ENCODE measurements at regions of chr6 and their contacts with region 1.

Region 1: GRCh38 chr6:43673444-43674084 is 14.0 kb downstream of the MRPS18A start:
- DNase-seq: peak in 1 of 2 donors; percentile 79
- ATAC-seq: no peak
- H3K4me3 ChIP-seq: no peak overlapping the region
- H3K27ac ChIP-seq: peak overlapping the region; percentile 95 to 97 (median 96)
- H3K4me1 ChIP-seq: peaks cover 88 to 96% of the 10 kb centered on the region in 2 donors
- H3K27me3 ChIP-seq: no peaks in the 10 kb centered on the region
- CTCF ChIP-seq: no peak
- POLR2A ChIP-seq: no peak

Region 2: GRCh38 chr6:43798688-43799444 is 125.3 kb after region 1 on chr6:
- in situ Hi-C with region 1: no loop called
- intact Hi-C with region 1: loop called (anchors 1 kb)
- DNase-seq: peak; percentile 98 to 99
- ATAC-seq: peak; percentile 88 to 91
- H3K4me3 ChIP-seq: no peak overlapping the region
- H3K27ac ChIP-seq: peak overlapping the region; percentile 91 to 96 (median 92)
- H3K4me1 ChIP-seq: peaks cover 47 to 59% of the 10 kb centered on the region in 2 donors
- H3K27me3 ChIP-seq: no peaks in the 10 kb centered on the region
- CTCF ChIP-seq: peak in 1 of 5 experiments; percentile 34
- POLR2A ChIP-seq: peak; percentile 88 to 94